Ascending aorta (tissue), 2 donors: ENCODE measurements at regions of chr12 and their contacts with region 1.

Region 1: GRCh38 chr12:52023182-52023975 is 16.6 kb downstream of the TAMALIN start:
- DNase-seq: peak in 1 of 2 donors; percentile 93
- H3K4me3 ChIP-seq: peak overlapping the region; percentile 67 to 69
- H3K27ac ChIP-seq: peak overlapping the region in 1 of 2 donors; percentile 44
- H3K4me1 ChIP-seq: peaks cover 7 to 28% of the 10 kb centered on the region in 2 donors
- H3K27me3 ChIP-seq: no peaks in the 10 kb centered on the region
- CTCF ChIP-seq: peak; percentile 97 to 98 (median 98)

Region 2: GRCh38 chr12:51647647-51648046 is 375.7 kb before region 1 on chr12:
- intact Hi-C with region 1: no loop called
- DNase-seq: no peak
- H3K4me3 ChIP-seq: no peak overlapping the region
- H3K27ac ChIP-seq: no peak overlapping the region
- H3K4me1 ChIP-seq: no peaks in the 10 kb centered on the region
- H3K27me3 ChIP-seq: no peaks in the 10 kb centered on the region
- CTCF ChIP-seq: no peak

Region 3: GRCh38 chr12:51994959-51995358 is 28.4 kb before region 1 on chr12:
- intact Hi-C with region 1: loop called (anchors 1 kb)
- DNase-seq: no peak
- H3K4me3 ChIP-seq: no peak overlapping the region
- H3K27ac ChIP-seq: no peak overlapping the region
- H3K4me1 ChIP-seq: no peaks in the 10 kb centered on the region
- H3K27me3 ChIP-seq: no peaks in the 10 kb centered on the region
- CTCF ChIP-seq: no peak

Region 4: GRCh38 chr12:52050761-52051541 is 27.6 kb after region 1 on chr12 and contains the start of gene NR4A1:
- intact Hi-C with region 1: loop called (anchors 1 kb)
- DNase-seq: peak; percentile 95 to 100
- H3K4me3 ChIP-seq: peak within 1 kb of the TSS; percentile 78 to 79
- H3K27ac ChIP-seq: peak within 1 kb of the TSS; percentile 96 to 98
- H3K4me1 ChIP-seq: peaks cover 6 to 21% of the 10 kb centered on the region in 2 donors
- H3K27me3 ChIP-seq: no peaks in the 10 kb centered on the region
- CTCF ChIP-seq: peak in 1 of 3 experiments; percentile 31
- total RNA-seq, gene NR4A1: 722 TPM

Region 5: GRCh38 chr12:52082988-52083637 is 59.7 kb after region 1 on chr12:
- intact Hi-C with region 1: loop called (anchors 1 kb)
- DNase-seq: peak in 1 of 2 donors; percentile 79
- H3K4me3 ChIP-seq: no peak overlapping the region
- H3K27ac ChIP-seq: peak overlapping the region in 1 of 2 donors; percentile 67
- H3K4me1 ChIP-seq: peaks cover 7 to 21% of the 10 kb centered on the region in 2 donors
- H3K27me3 ChIP-seq: no peaks in the 10 kb centered on the region
- CTCF ChIP-seq: peak; percentile 93 to 99 (median 97)